ENCODE measurements at regions of chr3 and their contacts with region 1.

Region 1: GRCh38 chr3:130746246-130747039 is at the start of gene PIK3R4:
- DNase-seq: peak; percentile 99
- H3K4me3 ChIP-seq: peak within 1 kb of the TSS; percentile 66 to 95 (median 78)
- H3K27ac ChIP-seq: peak within 1 kb of the TSS; percentile 81 to 91 (median 86)
- H3K4me1 ChIP-seq: peaks cover 41 to 62% (median 56%) of the 10 kb centered on the region in 4 donors
- H3K27me3 ChIP-seq: no peaks in the 10 kb centered on the region
- CTCF ChIP-seq: no peak
- EP300 ChIP-seq: no peak
- POLR2A ChIP-seq: peak; percentile 50
- total RNA-seq, gene PIK3R4: 30.6 to 40.0 (median 38.0) TPM

Region 2: DNA sequence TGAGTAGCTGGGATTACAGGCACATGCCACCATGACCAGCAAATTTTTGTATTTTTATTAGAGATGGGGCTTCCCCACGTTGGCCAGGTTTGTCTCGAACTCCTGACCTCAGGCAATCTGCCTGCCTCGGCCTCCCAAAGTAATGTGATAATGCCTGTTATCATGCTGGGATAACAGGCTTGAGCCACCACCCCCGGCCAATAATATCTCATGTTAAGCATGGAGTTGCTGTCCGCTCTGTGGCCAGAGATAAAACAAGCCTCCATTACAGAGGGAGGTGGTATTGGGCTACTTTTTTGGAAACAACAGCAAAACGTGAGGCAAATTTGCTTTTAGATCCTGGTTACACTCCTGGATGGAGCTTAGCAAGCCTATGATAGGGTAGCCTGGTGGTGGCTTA is 697.7 kb before region 1 on chr3:
- intact Hi-C with region 1: no loop called
- DNase-seq: no peak
- H3K4me3 ChIP-seq: no peak overlapping the region
- H3K27ac ChIP-seq: no peak overlapping the region
- H3K4me1 ChIP-seq: peaks cover 0 to 5% (median 1%) of the 10 kb centered on the region in 4 donors
- H3K27me3 ChIP-seq: no peaks in the 10 kb centered on the region
- CTCF ChIP-seq: no peak
- EP300 ChIP-seq: no peak
- POLR2A ChIP-seq: no peak

Region 3: GRCh38 chr3:130442284-130442683 is 304.2 kb before region 1 on chr3:
- intact Hi-C with region 1: no loop called
- DNase-seq: no peak
- H3K4me3 ChIP-seq: no peak overlapping the region
- H3K27ac ChIP-seq: no peak overlapping the region
- H3K4me1 ChIP-seq: no peaks in the 10 kb centered on the region
- H3K27me3 ChIP-seq: no peaks in the 10 kb centered on the region
- CTCF ChIP-seq: no peak
- EP300 ChIP-seq: no peak
- POLR2A ChIP-seq: no peak

Region 4: DNA sequence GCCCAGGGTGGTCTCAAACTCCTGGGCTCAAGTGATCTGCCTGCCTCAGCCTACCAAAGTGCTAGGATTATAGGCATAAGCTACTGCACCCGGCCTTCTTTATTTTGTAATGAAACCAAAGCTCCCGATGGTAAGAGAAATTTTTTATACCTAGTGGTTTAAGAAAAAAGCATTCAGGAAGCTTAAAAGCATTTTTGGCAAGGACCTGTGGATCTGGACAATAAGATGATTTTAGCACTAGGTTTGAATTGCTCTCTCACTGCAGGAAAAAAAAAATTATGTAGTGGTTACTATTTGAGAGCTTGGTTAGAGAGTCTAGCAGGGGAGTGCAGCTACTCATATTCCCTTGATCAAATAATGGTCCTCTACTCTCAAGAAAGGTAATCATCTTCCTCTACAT is 65.1 kb after region 1 on chr3:
- intact Hi-C with region 1: no loop called
- DNase-seq: no peak
- H3K4me3 ChIP-seq: no peak overlapping the region
- H3K27ac ChIP-seq: no peak overlapping the region
- H3K4me1 ChIP-seq: no peaks in the 10 kb centered on the region
- H3K27me3 ChIP-seq: no peaks in the 10 kb centered on the region
- CTCF ChIP-seq: no peak
- EP300 ChIP-seq: no peak
- POLR2A ChIP-seq: no peak

Region 5: GRCh38 chr3:130834476-130834875 is 88.0 kb after region 1 on chr3:
- intact Hi-C with region 1: no loop called
- DNase-seq: no peak
- H3K4me3 ChIP-seq: no peak overlapping the region
- H3K27ac ChIP-seq: no peak overlapping the region
- H3K4me1 ChIP-seq: peaks cover 7 to 13% (median 8%) of the 10 kb centered on the region in 4 donors
- H3K27me3 ChIP-seq: no peaks in the 10 kb centered on the region
- CTCF ChIP-seq: no peak
- EP300 ChIP-seq: no peak
- POLR2A ChIP-seq: no peak

Region 6: GRCh38 chr3:131026321-131027178 is 280.1 kb after region 1 on chr3 and contains the starts of genes ASTE1 and NEK11:
- intact Hi-C with region 1: loop called (anchors 10 kb)
- DNase-seq: peak; percentile 97
- H3K4me3 ChIP-seq: peak within 1 kb of the TSS; percentile 69 to 88 (median 75)
- H3K27ac ChIP-seq: peak within 1 kb of the TSS; percentile 83 to 91 (median 88)
- H3K4me1 ChIP-seq: peaks cover 14 to 60% (median 45%) of the 10 kb centered on the region in 4 donors
- H3K27me3 ChIP-seq: no peaks in the 10 kb centered on the region
- CTCF ChIP-seq: peak in 1 of 3 experiments; percentile 11
- EP300 ChIP-seq: no peak
- POLR2A ChIP-seq: no peak
- total RNA-seq, gene ASTE1: 2.8 to 4.6 (median 4.1) TPM
- total RNA-seq, gene NEK11: 5.4 to 12.0 (median 6.8) TPM

Measured in esophagus muscularis mucosa (tissue), 4 donors.